MCF 10A (cell line): ENCODE measurements at regions of chr1 and their contacts with region 1.

Region 1: GRCh38 chr1:230978491-230979388 is at the starts of genes ARV1 and TTC13:
- DNase-seq: peak; percentile 100
- H3K4me3 Mint-ChIP-seq: no peak within 1 kb of the TSS
- H3K27ac Mint-ChIP-seq: peak within 1 kb of the TSS; percentile 83
- H3K4me1 Mint-ChIP-seq: peaks cover 7% of the 10 kb centered on the region
- H3K27me3 Mint-ChIP-seq: no peaks in the 10 kb centered on the region
- CTCF ChIP-seq: peak; percentile 15
- total RNA-seq, gene ARV1: 41.8 and 51.8 TPM in 2 replicates
- total RNA-seq, gene TTC13: 29.9 and 35.2 TPM in 2 replicates

Region 2: DNA sequence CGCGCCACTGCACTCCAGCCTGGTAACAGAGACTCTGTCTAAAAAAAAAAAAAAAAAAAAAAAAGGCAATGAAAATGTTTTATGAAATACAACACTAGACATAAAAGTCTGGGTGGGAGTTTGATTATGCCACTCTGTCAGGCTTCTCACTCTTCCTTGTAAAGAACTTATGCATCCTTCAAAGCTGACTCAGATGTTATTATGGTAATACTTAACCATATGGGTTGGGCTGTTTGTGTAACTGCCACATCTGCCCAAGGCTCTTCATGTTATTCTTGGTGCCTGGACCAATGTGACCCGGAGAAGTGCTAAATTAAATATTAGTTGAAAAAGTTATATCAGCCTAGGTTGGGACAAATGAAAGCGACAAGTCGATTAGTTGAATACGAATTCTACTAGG is 37.5 kb after region 1 on chr1:
- CTCF ChIA-PET with region 1: interaction called, 5 read pairs
- POLR2A ChIA-PET with region 1: interaction called, 7 read pairs
- intact Hi-C with region 1: loop called (anchors 2 kb)
- DNase-seq: no peak
- H3K4me3 Mint-ChIP-seq: no peak overlapping the region
- H3K27ac Mint-ChIP-seq: no peak overlapping the region
- H3K4me1 Mint-ChIP-seq: peaks cover 22% of the 10 kb centered on the region
- H3K27me3 Mint-ChIP-seq: no peaks in the 10 kb centered on the region
- CTCF ChIP-seq: no peak

Region 3: GRCh38 chr1:231170875-231171274 is 192.1 kb after region 1 on chr1:
- CTCF ChIA-PET with region 1: no interaction called
- POLR2A ChIA-PET with region 1: interaction called, 14 read pairs
- intact Hi-C with region 1: no loop called
- DNase-seq: peak; percentile 57
- H3K4me3 Mint-ChIP-seq: no peak overlapping the region
- H3K27ac Mint-ChIP-seq: peak overlapping the region; percentile 8
- H3K4me1 Mint-ChIP-seq: peaks cover 11% of the 10 kb centered on the region
- H3K27me3 Mint-ChIP-seq: peaks cover 20% of the 10 kb centered on the region
- CTCF ChIP-seq: peak; percentile 12